ENCODE measurements at regions of chr6 and their contacts with region 1.

Region 1: GRCh38 chr6:17226786-17227233 is 54.4 kb upstream of the RBM24 start:
- DNase-seq: no peak
- ATAC-seq: no peak
- H3K4me3 ChIP-seq: no peak overlapping the region
- H3K27ac ChIP-seq: no peak overlapping the region
- H3K4me1 ChIP-seq: no peaks in the 10 kb centered on the region
- H3K27me3 ChIP-seq: no peaks in the 10 kb centered on the region

Region 2: DNA sequence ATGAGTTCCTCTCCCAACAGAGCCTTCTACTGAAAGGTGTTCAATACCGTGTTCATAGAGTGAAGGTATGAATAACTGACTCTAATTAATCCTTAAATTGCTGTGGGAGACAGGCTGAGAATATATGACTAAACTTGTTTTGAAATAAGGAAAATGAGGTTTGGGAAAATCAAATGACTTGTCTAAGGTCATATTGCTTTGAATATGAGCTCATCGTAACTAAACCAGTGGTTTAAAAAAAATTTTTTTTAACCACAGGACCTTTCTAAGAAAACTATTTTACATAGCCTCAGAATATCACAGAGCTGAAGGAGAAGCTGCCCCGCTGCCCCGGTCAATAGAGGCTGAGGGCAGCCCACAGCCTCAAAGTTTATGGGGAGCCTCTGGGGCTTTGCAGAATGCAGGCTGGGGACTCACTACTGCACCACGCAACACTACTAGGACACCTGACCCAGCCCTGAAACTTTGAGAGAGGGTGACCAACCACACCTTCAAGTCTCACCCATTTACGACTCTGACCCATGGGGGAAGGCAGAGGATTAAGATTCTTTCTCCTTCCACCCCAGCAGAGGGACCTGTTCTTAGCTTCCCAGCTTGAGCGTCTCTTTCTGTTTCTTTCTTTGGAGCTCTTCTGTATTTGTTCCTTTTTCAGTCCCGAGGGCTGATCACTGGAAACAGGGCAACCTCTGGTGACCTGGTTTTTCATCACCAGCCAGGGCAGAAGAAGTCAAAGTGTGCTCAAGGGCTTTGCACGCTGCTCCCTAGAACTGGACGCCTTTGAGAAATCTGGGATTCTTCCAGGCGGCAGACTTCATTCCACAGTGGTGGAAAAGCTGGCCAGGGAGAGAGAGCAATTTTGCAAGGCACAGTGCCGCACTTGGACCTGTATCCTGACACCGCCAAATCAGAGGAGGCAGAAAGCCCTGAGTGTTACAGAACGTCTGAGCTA is 685.7 kb before region 1 on chr6:
- intact Hi-C with region 1: no loop called
- DNase-seq: peak; percentile 55 to 80 (median 76)
- ATAC-seq: peak; percentile 70 to 86
- H3K4me3 ChIP-seq: no peak overlapping the region
- H3K27ac ChIP-seq: peak overlapping the region; percentile 13
- H3K4me1 ChIP-seq: peaks cover 5% of the 10 kb centered on the region
- H3K27me3 ChIP-seq: no peaks in the 10 kb centered on the region

Region 3: DNA sequence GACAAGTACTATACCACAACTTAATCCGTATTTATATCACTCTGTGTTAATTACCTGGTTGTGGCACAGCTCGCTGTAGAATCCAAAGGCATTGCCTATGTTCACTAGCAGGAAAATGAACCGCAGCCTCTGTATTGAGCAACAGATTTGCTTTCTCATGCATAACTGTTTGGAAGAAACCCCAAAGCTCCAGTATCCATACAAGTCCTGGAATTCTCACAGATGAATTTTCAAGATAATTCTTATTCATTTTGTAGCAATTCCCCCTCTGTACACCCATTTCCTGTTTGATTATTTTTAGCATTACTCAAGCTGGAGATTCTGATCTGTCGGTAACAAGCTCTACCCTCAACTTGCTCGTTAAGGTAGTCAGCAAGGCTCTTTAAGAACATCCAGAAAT is 61.4 kb before region 1 on chr6:
- intact Hi-C with region 1: no loop called
- DNase-seq: no peak
- ATAC-seq: no peak
- H3K4me3 ChIP-seq: no peak overlapping the region
- H3K27ac ChIP-seq: no peak overlapping the region
- H3K4me1 ChIP-seq: no peaks in the 10 kb centered on the region
- H3K27me3 ChIP-seq: no peaks in the 10 kb centered on the region

Region 4: GRCh38 chr6:17269840-17270239 is 43.0 kb after region 1 on chr6:
- intact Hi-C with region 1: loop called in 1 of 4 experiments (anchors 5 kb)
- DNase-seq: no peak
- ATAC-seq: peak; percentile 41 to 43
- H3K4me3 ChIP-seq: no peak overlapping the region
- H3K27ac ChIP-seq: peak overlapping the region; percentile 49
- H3K4me1 ChIP-seq: peaks cover 2% of the 10 kb centered on the region
- H3K27me3 ChIP-seq: no peaks in the 10 kb centered on the region